ENCODE measurements at regions of chrX and their contacts with region 1.

Region 1: GRCh38 chrX:12984629-12985319 is 9.9 kb downstream of the TMSB4X start:
- DNase-seq: no peak
- ATAC-seq: no peak

Region 2: DNA sequence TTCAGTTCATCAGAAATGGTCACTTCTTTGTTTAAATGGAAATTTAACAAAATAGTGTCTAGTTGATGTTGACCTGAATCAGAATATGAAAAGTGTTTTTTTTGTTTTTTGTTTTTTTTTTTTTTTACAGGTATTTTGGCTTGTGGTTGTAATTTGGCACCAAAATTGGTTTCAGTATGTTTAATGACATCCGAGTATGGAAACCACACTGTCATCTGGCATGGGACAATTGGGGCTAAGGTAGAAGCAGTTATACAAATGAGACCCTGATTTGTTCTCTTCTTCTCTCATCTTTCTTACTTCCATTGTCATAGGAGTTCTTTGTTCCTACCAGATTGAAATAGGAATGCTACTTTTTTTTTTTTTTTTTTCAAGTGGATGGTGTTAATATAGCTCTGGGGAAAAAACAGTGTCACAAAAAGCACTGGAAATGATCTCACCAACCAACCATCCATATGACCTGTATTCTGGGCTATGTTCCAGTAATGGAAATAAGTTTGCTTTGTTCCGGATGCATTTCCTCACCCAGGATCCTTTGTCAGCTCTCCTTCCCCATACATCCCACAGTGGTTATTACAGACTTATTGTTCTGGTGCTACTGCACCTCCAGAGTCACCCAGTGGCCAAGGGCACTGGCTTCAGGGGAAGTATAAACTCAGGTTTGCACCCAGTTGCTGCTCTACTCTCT is 239.2 kb after region 1 on chrX:
- intact Hi-C with region 1: loop called (anchors 10 kb)
- DNase-seq: no peak
- ATAC-seq: peak; percentile 59

Measured in Right ventricle myocardium inferior (tissue), 1 donor.